ENCODE measurements at regions of chr3 and their contacts with region 1.

Region 1: DNA sequence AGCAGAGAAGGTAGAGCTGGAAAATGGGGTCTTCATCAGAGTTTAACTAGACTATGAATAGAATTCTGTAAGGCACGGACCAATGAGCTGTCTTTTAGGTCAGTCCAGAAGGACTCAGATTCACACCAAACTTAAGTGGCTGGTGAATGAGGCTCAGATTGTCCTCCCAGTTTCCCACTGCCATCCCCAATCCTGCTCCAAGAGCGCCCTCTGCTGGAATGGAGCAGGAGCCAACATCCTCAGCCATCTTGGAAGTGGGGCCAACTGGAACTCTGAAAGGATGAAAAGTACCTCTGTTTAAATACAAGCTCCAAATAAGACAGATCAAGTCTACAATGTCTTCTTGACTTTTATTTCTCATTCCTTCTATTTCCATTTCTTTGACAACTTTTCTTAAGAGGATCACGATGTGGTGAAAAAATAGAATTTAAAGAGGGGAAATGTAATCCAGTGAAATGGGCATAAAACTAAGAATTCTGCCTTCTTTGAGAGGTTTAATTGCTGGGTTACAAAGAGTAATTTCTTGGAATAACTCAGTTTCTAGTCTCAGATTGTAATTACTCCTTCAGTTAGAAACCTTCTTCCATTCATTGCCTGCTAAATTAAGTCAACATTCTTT is 217.1 kb upstream of the TPRG1 start:
- DNase-seq: peak; percentile 90
- ATAC-seq: peak; percentile 61
- H3K4me3 Mint-ChIP-seq: no peak overlapping the region
- H3K27ac Mint-ChIP-seq: no peak overlapping the region
- H3K4me1 Mint-ChIP-seq: peaks cover 46% of the 10 kb centered on the region
- H3K27me3 Mint-ChIP-seq: no peaks in the 10 kb centered on the region

Region 2: DNA sequence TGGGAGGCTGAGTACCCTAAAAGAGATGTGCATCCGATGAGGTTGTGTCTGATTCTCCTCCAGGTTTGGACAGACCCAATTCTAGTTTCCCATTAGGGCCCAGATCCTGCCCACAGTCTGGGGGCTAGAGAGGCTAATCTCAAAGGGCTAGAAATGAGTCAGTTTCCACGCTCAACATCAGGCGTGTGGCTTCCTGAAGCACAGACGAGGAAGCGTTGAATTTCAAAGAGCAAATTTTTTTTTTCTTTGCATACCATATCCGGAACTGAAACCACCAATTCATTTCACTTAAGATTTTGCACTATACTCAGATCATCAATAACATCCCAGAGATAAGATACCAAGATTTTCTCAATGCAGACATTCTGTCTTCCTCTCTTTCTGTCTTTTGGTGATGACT is 1035.7 kb before region 1 on chr3:
- CTCF ChIA-PET with region 1: no interaction called
- POLR2A ChIA-PET with region 1: no interaction called
- intact Hi-C with region 1: loop called in 1 of 2 experiments (anchors 5 kb)
- DNase-seq: peak; percentile 69
- ATAC-seq: peak; percentile 50
- H3K4me3 Mint-ChIP-seq: peak overlapping the region; percentile 59
- H3K27ac Mint-ChIP-seq: peak overlapping the region; percentile 86
- H3K4me1 Mint-ChIP-seq: peaks cover 70% of the 10 kb centered on the region
- H3K27me3 Mint-ChIP-seq: peaks cover 2% of the 10 kb centered on the region

Region 3: DNA sequence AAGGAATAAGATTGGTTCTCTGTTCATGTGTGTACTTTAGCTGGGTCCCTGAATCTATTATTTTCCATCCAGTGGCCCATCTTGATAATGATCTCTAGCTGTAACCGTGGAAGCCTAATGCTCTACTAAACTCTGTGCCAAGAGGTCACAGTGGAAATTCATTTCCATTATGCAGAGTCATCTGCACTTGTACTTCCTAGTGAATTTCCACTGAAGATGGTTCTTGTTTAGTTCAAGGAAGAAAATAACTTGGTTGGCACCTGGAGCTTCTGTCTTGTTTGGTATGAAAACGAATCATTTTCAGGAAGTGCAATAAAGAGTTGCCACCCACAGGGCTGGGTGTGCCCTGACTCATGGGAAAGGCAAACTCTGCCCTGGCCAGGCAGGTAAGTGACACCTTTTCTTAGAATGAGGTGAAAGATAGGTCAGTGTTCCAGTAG is 790.4 kb before region 1 on chr3:
- CTCF ChIA-PET with region 1: no interaction called
- POLR2A ChIA-PET with region 1: no interaction called
- intact Hi-C with region 1: loop called (anchors 10 kb)
- DNase-seq: peak; percentile 52
- ATAC-seq: peak; percentile 24
- H3K4me3 Mint-ChIP-seq: no peak overlapping the region
- H3K27ac Mint-ChIP-seq: peak overlapping the region; percentile 74
- H3K4me1 Mint-ChIP-seq: peaks cover 58% of the 10 kb centered on the region
- H3K27me3 Mint-ChIP-seq: no peaks in the 10 kb centered on the region

Region 4: GRCh38 chr3:188400494-188401243 is 554.0 kb before region 1 on chr3:
- CTCF ChIA-PET with region 1: interaction called, 3 read pairs
- POLR2A ChIA-PET with region 1: interaction called, 3 read pairs
- intact Hi-C with region 1: loop called (anchors 10 kb)
- DNase-seq: peak; percentile 46
- ATAC-seq: peak; percentile 85
- H3K4me3 Mint-ChIP-seq: no peak overlapping the region
- H3K27ac Mint-ChIP-seq: peak overlapping the region; percentile 26
- H3K4me1 Mint-ChIP-seq: peaks cover 69% of the 10 kb centered on the region
- H3K27me3 Mint-ChIP-seq: no peaks in the 10 kb centered on the region

Region 5: GRCh38 chr3:188697127-188697526 is 257.6 kb before region 1 on chr3:
- CTCF ChIA-PET with region 1: interaction called, 5 read pairs
- POLR2A ChIA-PET with region 1: no interaction called
- intact Hi-C with region 1: loop called in 1 of 2 experiments (anchors 2 kb)
- DNase-seq: peak; percentile 54
- ATAC-seq: peak; percentile 42
- H3K4me3 Mint-ChIP-seq: no peak overlapping the region
- H3K27ac Mint-ChIP-seq: no peak overlapping the region
- H3K4me1 Mint-ChIP-seq: peaks cover 47% of the 10 kb centered on the region
- H3K27me3 Mint-ChIP-seq: peaks cover 2% of the 10 kb centered on the region

Region 6: GRCh38 chr3:189041482-189042090 is 86.9 kb after region 1 on chr3:
- CTCF ChIA-PET with region 1: interaction called, 60 read pairs
- POLR2A ChIA-PET with region 1: no interaction called
- intact Hi-C with region 1: loop called (anchors 2 to 5 kb)
- DNase-seq: peak; percentile 87
- ATAC-seq: peak; percentile 93
- H3K4me3 Mint-ChIP-seq: no peak overlapping the region
- H3K27ac Mint-ChIP-seq: no peak overlapping the region
- H3K4me1 Mint-ChIP-seq: peaks cover 36% of the 10 kb centered on the region
- H3K27me3 Mint-ChIP-seq: peaks cover 6% of the 10 kb centered on the region